Activated T-helper 1 cell treated with anti-CD3 and anti-CD28 coated beads, Interleukin-12 subunit alpha, Interleukin-12 subunit beta, Interleukin-2, Interleukin-4 antibody, amounts not matched to agents 30 ng/mL and 10 ng/mL and 1 ng/mL, durations not matched to agents 14 hours and 24 hours and 36 hours (primary cell): ENCODE measurements at regions of chr19 and their contacts with region 1.

Region 1: DNA sequence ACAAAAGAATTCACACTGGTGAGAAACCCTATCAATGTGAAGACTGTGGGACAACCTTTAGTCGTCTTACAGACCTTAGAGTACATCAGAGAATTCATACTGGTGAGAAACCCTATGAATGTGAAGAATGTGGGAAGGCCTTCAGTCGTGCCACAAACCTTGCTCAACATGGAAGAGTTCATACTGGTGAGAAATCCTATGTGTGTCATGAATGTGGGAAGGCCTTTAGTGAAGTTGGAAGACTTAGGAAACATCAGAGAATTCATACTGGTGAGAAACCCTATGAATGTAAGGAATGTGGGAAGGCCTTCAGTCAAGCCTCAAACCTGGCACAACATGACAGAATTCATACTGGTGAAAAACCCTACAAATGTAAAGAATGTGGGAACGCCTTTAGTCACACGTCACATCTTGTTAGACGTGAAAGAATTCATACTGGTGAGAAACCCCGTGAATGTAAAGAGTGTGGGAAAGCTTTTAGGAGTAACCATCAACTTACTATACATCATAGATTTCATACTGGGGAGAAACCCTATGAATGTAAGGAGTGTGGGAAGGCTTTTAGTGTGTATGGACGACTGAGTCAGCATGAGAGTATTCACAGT is 24.0 kb upstream of the ZNF573 start:
- DNase-seq: no peak
- H3K4me3 Mint-ChIP-seq: no peak overlapping the region
- H3K27ac Mint-ChIP-seq: no peak overlapping the region
- H3K4me1 Mint-ChIP-seq: no peaks in the 10 kb centered on the region
- H3K27me3 Mint-ChIP-seq: no peaks in the 10 kb centered on the region

Region 2: DNA sequence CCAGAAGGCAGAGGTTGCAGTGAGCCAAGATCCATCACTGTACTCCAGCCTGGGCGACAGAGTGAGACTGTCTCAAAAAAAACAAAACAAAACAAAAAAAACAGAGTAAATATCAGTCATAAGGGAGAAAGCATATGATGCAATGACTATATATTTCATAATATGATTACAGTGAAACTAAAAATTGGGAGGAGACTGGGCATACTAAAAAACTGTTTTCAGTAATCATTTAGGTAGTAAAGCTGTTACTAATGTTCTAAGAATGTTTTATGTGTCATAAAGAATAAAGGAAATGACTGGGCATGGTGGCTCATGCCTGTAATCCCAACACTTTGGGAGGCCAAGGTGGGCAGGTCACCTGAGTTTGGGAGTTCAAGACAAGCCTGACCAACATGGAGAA is 39.9 kb before region 1 on chr19:
- intact Hi-C with region 1: loop called (anchors 10 kb)
- DNase-seq: no peak
- H3K4me3 Mint-ChIP-seq: no peak overlapping the region
- H3K27ac Mint-ChIP-seq: no peak overlapping the region
- H3K4me1 Mint-ChIP-seq: no peaks in the 10 kb centered on the region
- H3K27me3 Mint-ChIP-seq: no peaks in the 10 kb centered on the region